ENCODE measurements at regions of chr3 and their contacts with region 1.

Region 1: DNA sequence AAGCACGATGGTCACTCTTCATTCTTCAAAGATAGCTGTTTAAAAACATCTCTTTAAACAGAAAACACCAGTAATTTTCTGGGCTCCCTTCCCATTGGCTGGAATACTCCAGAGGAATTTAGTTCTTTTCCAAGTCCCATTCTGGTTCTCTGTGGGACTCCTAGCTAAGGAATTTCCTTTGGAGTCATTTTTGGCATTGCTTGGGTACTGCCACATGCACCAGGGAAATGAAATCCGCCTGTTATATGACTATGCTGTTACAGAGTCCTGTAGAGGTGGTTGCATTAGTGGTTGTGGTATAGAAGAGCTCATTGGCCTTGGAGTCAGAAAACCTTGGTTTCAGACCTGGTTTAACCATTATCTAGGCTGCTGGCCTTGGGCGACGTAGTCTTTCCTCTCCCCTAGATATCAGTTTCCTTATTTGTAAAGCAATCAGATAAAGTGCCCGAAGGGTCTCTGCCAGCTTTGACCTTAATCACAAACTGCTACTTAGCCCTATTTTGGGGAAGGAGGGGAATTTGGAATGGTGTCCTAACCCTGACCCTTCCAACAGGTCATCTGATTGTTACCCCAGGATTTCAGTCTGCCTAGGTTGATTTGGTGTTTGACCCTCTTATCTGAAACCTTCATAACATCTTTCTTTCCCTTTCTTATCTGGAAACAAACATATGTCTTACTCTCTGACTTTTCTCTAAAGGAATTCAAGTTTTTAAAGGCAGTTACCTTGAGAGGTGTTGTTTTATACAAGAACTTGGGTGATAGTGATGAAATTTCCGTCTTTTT is 13.4 kb downstream of the RTP1 start:
- DNase-seq: peak; percentile 95
- H3K4me3 ChIP-seq: no peak overlapping the region
- CTCF ChIP-seq: no peak

Region 2: GRCh38 chr3:187139126-187139894 is 71.4 kb before region 1 on chr3 and contains the start of gene RPL39L:
- in situ Hi-C with region 1: no loop called
- DNase-seq: peak; percentile 40
- H3K4me3 ChIP-seq: peak within 1 kb of the TSS; percentile 62
- CTCF ChIP-seq: peak; percentile 88

Region 3: DNA sequence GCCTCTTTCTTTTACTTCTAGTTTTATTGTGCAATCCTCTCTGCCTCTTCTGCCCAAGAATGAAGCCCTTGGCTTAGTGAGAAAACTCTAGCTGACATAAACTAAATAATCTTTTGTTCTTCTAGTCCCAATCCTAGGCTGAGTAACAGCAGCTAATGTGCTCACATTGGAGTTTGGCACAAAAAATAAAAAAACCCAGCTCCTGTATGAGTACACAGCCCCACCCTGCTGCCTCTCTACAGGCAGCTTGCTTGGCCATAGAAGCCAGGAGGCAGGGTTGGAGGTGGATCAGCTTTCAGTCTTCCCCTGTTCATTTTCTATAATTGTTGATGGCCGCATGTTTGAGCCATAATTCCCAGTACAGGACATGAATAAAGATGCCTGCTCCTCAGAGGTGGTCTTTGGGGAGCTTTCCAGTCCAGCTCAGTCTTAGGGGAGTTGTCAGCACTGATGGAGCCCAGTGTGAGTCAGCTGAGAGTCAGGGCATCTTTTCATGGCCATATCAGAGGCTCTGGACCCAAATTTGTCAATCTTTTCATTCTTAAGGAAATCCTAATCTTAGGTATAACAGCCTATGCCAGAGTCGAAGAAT is 33.3 kb after region 1 on chr3:
- in situ Hi-C with region 1: no loop called
- DNase-seq: no peak
- H3K4me3 ChIP-seq: no peak overlapping the region
- CTCF ChIP-seq: no peak

Region 4: GRCh38 chr3:187319699-187320302 is 109.1 kb after region 1 on chr3:
- in situ Hi-C with region 1: loop called (anchors 5 kb)
- DNase-seq: peak; percentile 66
- H3K4me3 ChIP-seq: no peak overlapping the region
- CTCF ChIP-seq: peak; percentile 99

Region 5: DNA sequence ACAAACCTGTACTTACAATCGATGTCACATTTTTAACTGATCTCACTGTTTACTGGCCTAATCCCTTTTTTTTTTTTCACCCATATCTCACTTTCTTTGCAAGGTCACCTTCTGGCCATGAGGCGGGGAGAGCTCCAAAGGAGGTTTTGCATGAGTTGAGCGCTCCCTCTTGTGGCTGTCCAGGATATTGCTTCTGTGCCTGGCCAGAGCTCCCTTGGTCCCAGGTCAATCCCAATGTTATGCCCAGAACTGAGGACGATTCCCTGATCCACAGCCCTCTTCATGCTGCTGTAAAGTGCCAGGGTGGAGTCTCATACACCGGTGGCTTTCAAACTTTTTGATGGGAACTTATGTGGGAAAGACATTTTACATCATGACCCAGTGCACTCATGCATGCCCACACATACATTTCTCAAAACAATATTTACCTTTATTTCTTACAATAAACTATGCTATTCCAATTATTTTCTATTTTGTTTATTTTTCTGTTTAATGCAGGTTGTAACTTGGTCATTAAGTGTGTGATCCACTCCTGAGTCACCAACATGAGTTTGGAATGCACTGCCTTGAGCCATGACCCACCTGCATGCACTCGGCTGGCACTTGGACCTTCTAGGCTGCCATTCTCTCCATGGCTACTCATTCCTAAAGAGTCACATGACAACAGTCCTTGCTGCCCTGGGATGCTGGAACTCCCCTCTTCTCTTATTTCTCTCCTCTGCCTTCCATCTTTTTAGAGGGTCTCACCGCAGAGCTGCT is 469.1 kb after region 1 on chr3:
- in situ Hi-C with region 1: loop called (anchors 25 kb)
- DNase-seq: no peak
- H3K4me3 ChIP-seq: no peak overlapping the region
- CTCF ChIP-seq: peak; percentile 98